ENCODE measurements at regions of chr9 and their contacts with region 1.

Region 1: GRCh38 chr9:103702572-103702971 is 391.5 kb upstream of the SMC2 start:
- DNase-seq: no peak
- ATAC-seq: no peak
- H3K4me3 ChIP-seq: no peak overlapping the region
- H3K27ac ChIP-seq: no peak overlapping the region
- H3K4me1 ChIP-seq: no peaks in the 10 kb centered on the region
- H3K27me3 ChIP-seq: peaks cover 0 to 2% (median 0%) of the 10 kb centered on the region in 3 donors
- CTCF ChIP-seq: no peak

Region 2: DNA sequence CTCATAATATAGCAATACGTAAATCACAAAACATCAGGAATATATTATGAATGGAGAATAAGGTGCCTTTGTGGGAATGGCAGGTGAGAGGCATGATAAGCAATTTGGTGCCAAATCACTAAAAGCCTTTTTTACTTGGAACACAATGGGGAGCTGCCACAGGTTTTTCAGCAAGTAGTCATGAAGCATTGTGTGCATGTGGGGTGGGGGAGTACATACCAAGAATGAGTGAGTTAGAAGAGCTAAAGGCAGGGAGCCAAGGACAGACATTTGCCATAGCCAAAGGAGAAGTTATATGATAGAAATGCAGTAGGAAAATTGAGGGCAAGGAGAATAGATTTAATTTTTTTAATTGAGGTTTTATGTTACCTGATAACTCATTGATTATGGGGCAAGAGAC is 53.5 kb before region 1 on chr9:
- intact Hi-C with region 1: no loop called
- DNase-seq: no peak
- ATAC-seq: no peak
- H3K4me3 ChIP-seq: no peak overlapping the region
- H3K27ac ChIP-seq: no peak overlapping the region
- H3K4me1 ChIP-seq: no peaks in the 10 kb centered on the region
- H3K27me3 ChIP-seq: no peaks in the 10 kb centered on the region
- CTCF ChIP-seq: no peak

Region 3: DNA sequence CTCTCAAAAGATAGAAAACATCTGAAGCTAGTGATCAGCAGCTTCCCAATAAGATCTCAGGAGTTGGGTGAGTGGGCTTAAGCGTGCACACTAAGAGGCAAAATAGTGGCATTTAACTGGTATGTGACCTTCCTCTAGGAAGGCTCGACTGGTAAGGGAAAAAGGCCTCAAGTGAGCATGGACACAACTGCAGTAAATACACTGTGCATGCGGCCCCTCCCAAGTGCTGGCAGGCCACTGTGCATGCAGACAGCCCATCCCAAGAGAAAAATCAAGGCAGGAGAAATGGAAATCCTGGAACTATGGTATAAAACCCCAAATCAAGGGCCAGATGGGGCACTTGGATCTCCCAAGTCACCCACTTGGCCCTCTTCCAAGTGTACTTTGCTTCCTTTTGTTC is 504.2 kb after region 1 on chr9:
- intact Hi-C with region 1: loop called in 1 of 2 experiments (anchors 5 kb)
- DNase-seq: no peak
- ATAC-seq: no peak
- H3K4me3 ChIP-seq: no peak overlapping the region
- H3K27ac ChIP-seq: no peak overlapping the region
- H3K4me1 ChIP-seq: no peaks in the 10 kb centered on the region
- H3K27me3 ChIP-seq: no peaks in the 10 kb centered on the region
- CTCF ChIP-seq: no peak

Measured in psoas muscle (tissue), 8 donors.